ENCODE measurements at regions of chr20 and their contacts with region 1.

Region 1: GRCh38 chr20:17530716-17531664 is at the start of gene BFSP1:
- DNase-seq: peak; percentile 75
- H3K4me3 Mint-ChIP-seq: peak within 1 kb of the TSS; percentile 95
- H3K27ac Mint-ChIP-seq: peak within 1 kb of the TSS; percentile 94
- H3K4me1 Mint-ChIP-seq: peaks cover 33% of the 10 kb centered on the region
- H3K27me3 Mint-ChIP-seq: no peaks in the 10 kb centered on the region
- total RNA-seq, gene BFSP1: 2.7 to 3.2 TPM

Region 2: DNA sequence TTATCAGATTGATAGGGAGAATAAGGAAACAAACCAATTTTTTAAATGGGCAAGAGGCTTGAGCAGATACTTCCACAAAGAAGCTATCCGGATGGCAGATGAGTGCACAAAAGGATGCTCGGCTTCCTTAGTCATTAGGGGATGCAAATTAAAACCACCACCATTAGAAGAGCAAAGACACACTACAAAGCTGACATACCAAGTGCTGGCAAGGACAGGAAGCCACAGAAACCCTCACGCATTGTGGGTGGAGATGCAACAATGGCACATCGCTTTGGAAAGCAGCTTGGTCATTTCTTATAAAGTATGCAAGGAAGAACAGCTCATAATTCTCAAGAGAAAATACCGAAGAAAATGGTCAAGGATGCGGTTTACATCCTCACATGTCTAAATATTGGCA is 19.6 kb before region 1 on chr20:
- CTCF ChIA-PET with region 1: interaction called, 77 read pairs
- POLR2A ChIA-PET with region 1: interaction called, 71 read pairs
- DNase-seq: peak; percentile 72
- H3K4me3 Mint-ChIP-seq: no peak overlapping the region
- H3K27ac Mint-ChIP-seq: peak overlapping the region; percentile 67
- H3K4me1 Mint-ChIP-seq: peaks cover 57% of the 10 kb centered on the region
- H3K27me3 Mint-ChIP-seq: peaks cover 8% of the 10 kb centered on the region

Region 3: DNA sequence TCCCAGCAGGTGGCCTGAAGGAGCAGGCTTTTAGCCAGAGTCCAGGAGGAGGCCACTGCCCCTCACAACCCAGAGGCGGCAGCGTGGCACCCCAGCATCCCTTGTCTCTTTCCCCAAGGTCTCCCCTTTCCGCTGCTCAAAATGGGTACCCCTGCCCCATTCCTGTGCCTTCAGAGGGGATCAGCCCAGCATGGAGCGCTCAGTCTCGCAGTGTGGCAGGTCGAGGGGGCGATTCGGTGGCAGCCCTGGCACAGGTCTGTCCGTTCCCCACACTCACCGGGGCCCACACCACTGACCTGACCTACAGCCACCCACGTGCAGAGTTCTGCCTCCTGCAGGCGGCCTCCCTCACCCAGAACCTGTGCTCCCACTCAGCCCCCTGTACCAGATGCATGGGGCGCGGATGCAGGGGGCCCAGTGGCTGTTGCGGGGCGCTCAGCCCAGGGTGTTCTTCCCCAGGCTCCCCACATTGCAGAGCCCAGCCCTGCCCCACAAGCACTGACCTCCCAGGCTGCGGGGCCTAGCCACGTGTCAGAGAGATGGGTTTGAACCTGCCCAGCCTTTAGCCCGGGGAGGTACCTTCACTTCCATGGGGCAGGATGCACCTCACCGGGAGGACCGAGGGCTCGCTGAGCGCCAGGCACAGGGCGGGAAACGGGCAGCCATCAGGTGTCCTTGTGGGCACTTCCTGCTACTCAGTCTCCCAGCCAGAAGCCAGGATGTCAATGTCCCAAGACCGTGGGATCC is 80.7 kb after region 1 on chr20:
- CTCF ChIA-PET with region 1: interaction called, 33 read pairs
- POLR2A ChIA-PET with region 1: interaction called, 15 read pairs
- DNase-seq: peak; percentile 35
- H3K4me3 Mint-ChIP-seq: peak overlapping the region; percentile 48
- H3K27ac Mint-ChIP-seq: peak overlapping the region; percentile 95
- H3K4me1 Mint-ChIP-seq: peaks cover 50% of the 10 kb centered on the region
- H3K27me3 Mint-ChIP-seq: no peaks in the 10 kb centered on the region